AG04450 (cell line): ENCODE measurements at regions of chr7 and their contacts with region 1.

Region 1: GRCh38 chr7:101602484-101603241 is 26.4 kb downstream of the MYL10 start:
- DNase-seq: peak; percentile 26
- H3K4me3 ChIP-seq: no peak overlapping the region
- H3K27ac ChIP-seq: no peak overlapping the region
- H3K27me3 ChIP-seq: peaks cover 4% of the 10 kb centered on the region
- CTCF ChIP-seq: peak; percentile 95

Region 2: DNA sequence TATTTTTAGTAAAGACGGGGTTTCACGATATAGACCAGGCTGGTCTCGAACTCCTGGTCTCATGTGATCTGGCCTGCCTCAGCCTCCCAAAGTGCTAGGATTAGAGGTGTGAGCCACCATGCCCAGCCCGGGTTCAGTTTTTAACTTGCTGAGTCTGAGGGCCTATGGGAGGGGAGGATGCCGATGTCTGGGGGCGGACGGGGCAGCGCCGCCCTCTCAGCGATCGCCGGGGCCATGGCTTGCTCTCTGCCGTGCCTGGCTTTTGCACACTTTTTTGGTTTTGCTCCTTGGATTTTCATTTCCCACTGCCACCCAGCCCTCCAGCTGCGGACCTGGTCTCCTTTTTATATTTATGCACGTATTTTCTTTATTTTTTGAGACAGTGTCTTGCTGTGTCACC is 255.2 kb before region 1 on chr7:
- CTCF ChIA-PET with region 1: no interaction called
- POLR2A ChIA-PET with region 1: no interaction called
- DNase-seq: no peak
- H3K4me3 ChIP-seq: no peak overlapping the region
- H3K27ac ChIP-seq: no peak overlapping the region
- H3K27me3 ChIP-seq: peaks cover 5% of the 10 kb centered on the region
- CTCF ChIP-seq: no peak

Region 3: GRCh38 chr7:101625031-101625791 is 22.5 kb after region 1 on chr7:
- CTCF ChIA-PET with region 1: interaction called, 10 read pairs
- POLR2A ChIA-PET with region 1: no interaction called
- DNase-seq: no peak
- H3K4me3 ChIP-seq: no peak overlapping the region
- H3K27ac ChIP-seq: no peak overlapping the region
- H3K27me3 ChIP-seq: peaks cover 18% of the 10 kb centered on the region
- CTCF ChIP-seq: peak; percentile 30; the same call in 1 of the 2 replicates

Region 4: DNA sequence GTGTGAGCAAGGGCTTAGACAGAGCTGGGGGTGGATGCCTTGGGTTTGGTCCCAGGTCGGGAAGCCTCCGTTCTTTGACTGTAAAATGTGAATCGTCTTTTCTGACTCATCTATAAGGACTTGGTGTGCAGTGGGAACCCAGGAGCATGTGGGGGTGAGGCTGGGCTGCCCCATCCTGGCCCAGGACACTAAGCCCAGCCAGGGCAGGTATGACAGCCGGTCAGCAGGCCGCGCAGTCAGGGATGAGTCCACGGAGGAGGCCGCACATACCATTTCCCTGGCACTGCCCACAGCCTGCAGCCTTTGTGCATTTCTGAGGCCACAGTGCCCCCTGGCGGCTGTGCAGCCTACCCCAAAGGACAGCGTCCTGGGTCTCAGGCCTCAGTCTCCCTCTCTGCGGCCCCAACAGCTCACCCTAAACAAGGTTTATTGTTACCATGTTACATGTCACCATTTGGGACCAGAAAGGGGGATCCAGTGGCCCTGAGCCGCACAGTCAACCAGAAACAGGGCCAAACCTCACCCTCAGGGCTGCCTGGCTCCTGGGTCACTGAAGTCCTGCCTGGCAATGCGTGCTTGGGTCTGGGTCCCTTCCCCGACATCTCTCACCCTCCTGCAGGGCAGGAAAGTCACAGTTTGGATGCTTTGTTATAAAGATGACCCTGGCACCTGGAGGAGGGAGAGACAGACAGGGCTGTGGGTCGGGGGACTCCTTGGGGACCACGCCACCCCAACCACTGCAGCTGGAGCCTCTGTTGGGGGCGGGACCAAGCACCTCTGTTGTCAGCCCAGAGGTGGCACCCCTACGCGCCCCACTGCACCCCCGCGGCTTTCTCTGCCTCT is 669.6 kb after region 1 on chr7:
- CTCF ChIA-PET with region 1: interaction called, 16 read pairs
- POLR2A ChIA-PET with region 1: no interaction called
- DNase-seq: peak; percentile 41
- H3K4me3 ChIP-seq: no peak overlapping the region
- H3K27ac ChIP-seq: no peak overlapping the region
- H3K27me3 ChIP-seq: no peaks in the 10 kb centered on the region
- CTCF ChIP-seq: peak; percentile 93